ENCODE measurements at regions of chr4 and their contacts with region 1.

Region 1: GRCh38 chr4:164937576-164938270 is 39.7 kb downstream of the TRIM61 start:
- DNase-seq: no peak
- ATAC-seq: no peak
- H3K4me3 ChIP-seq: no peak overlapping the region
- H3K4me3 Mint-ChIP-seq: no peak overlapping the region
- H3K27ac ChIP-seq: no peak overlapping the region
- H3K27ac Mint-ChIP-seq: no peak overlapping the region
- H3K4me1 ChIP-seq: no peaks in the 10 kb centered on the region
- H3K4me1 Mint-ChIP-seq: no peaks in the 10 kb centered on the region
- H3K27me3 ChIP-seq: peaks cover 0 to 2% of the 10 kb centered on the region in 2 experiments
- H3K27me3 Mint-ChIP-seq: peaks cover 36% of the 10 kb centered on the region
- CTCF ChIP-seq: no peak

Region 2: GRCh38 chr4:164524789-164525188 is 412.9 kb before region 1 on chr4:
- CTCF ChIA-PET with region 1: no interaction called
- POLR2A ChIA-PET with region 1: no interaction called
- intact Hi-C with region 1: no loop called
- DNase-seq: no peak
- ATAC-seq: no peak
- H3K4me3 ChIP-seq: no peak overlapping the region
- H3K4me3 Mint-ChIP-seq: no peak overlapping the region
- H3K27ac ChIP-seq: no peak overlapping the region
- H3K27ac Mint-ChIP-seq: no peak overlapping the region
- H3K4me1 ChIP-seq: no peaks in the 10 kb centered on the region
- H3K4me1 Mint-ChIP-seq: no peaks in the 10 kb centered on the region
- H3K27me3 ChIP-seq: no peaks in the 10 kb centered on the region
- H3K27me3 Mint-ChIP-seq: no peaks in the 10 kb centered on the region
- CTCF ChIP-seq: no peak

Region 3: DNA sequence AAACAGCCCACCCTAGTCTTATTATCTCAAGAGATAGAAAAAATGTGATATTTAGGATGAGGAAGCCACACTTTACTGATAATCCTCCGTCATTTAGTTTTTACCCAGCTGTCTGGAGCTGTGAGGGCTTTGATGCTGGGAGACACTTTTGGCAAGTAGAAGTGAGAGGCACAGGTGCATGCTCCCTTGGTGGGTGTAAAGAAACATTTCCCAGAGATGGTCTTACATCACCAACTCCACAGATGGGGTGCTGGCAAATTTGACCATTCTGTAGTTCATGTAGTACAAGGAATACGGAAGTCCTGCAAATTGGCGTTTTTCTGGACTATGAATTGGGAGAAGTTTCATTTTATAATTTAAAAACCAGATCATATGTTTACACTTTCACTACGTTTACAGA is 11.3 kb after region 1 on chr4:
- CTCF ChIA-PET with region 1: interaction called, 3 read pairs
- POLR2A ChIA-PET with region 1: no interaction called
- intact Hi-C with region 1: loop called in 1 of 2 experiments (anchors 1 kb)
- DNase-seq: no peak
- ATAC-seq: no peak
- H3K4me3 ChIP-seq: no peak overlapping the region
- H3K4me3 Mint-ChIP-seq: no peak overlapping the region
- H3K27ac ChIP-seq: no peak overlapping the region
- H3K27ac Mint-ChIP-seq: no peak overlapping the region
- H3K4me1 ChIP-seq: no peaks in the 10 kb centered on the region
- H3K4me1 Mint-ChIP-seq: no peaks in the 10 kb centered on the region
- H3K27me3 ChIP-seq: no peaks in the 10 kb centered on the region
- H3K27me3 Mint-ChIP-seq: peaks cover 41% of the 10 kb centered on the region
- CTCF ChIP-seq: no peak